ENCODE measurements at regions of chr1 and their contacts with region 1.

Region 1: GRCh38 chr1:76154206-76154956 is 79.8 kb downstream of the ST6GALNAC3 start:
- DNase-seq: peak; percentile 68 to 84 (median 81)
- ATAC-seq: peak; percentile 95
- H3K4me3 ChIP-seq: peak overlapping the region; percentile 80
- H3K4me3 Mint-ChIP-seq: peak overlapping the region; percentile 82 to 96 (median 92)
- H3K27ac ChIP-seq: peak overlapping the region; percentile 46
- H3K27ac Mint-ChIP-seq: peak overlapping the region; percentile 39 to 94 (median 90)
- H3K4me1 ChIP-seq: peaks cover 0 to 3% of the 10 kb centered on the region in 2 donors
- H3K4me1 Mint-ChIP-seq: peaks cover 7 to 15% (median 10%) of the 10 kb centered on the region in 7 donors
- H3K27me3 ChIP-seq: no peaks in the 10 kb centered on the region
- H3K27me3 Mint-ChIP-seq: peaks cover 0 to 9% (median 0%) of the 10 kb centered on the region in 5 donors

Region 2: DNA sequence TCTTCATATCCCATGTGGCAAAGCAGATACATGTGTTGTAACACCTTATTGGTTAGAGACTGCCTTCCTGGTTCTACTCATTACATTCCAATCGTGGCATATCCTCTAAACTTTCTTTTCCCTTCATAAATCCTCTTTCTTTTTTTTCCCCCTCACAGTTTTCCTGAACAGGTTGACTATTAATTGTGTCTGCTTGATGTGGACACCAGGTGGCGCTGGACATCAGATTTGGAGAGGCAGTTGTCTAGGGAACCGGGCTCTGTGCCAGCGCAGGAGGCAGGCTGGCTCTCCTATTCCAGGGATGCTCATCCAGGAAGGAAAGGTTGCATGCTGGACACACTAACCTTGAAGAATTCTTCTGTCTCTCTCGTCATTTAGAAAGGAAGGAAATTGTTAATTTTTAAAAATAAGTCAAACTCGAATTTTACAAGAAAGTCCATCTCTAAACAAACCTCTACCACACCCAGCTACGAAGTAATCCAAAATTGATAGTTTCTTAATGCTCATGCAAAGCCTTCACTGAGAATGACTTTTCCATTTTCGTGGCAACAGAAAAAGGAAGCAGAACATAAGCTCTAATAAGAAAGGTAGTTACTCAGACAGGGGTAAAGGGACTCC is 162.8 kb before region 1 on chr1:
- CTCF ChIA-PET with region 1: interaction called, 3 read pairs
- POLR2A ChIA-PET with region 1: interaction called, 3 read pairs
- intact Hi-C with region 1: loop called (anchors 1 kb)
- DNase-seq: peak; percentile 24 to 69 (median 60)
- ATAC-seq: peak; percentile 68
- H3K4me3 ChIP-seq: no peak overlapping the region
- H3K4me3 Mint-ChIP-seq: no peak overlapping the region
- H3K27ac ChIP-seq: no peak overlapping the region
- H3K27ac Mint-ChIP-seq: no peak overlapping the region
- H3K4me1 ChIP-seq: no peaks in the 10 kb centered on the region
- H3K4me1 Mint-ChIP-seq: no peaks in the 10 kb centered on the region
- H3K27me3 ChIP-seq: peaks cover 4% of the 10 kb centered on the region in 2 donors
- H3K27me3 Mint-ChIP-seq: peaks cover 0 to 8% (median 3%) of the 10 kb centered on the region in 5 donors

Region 3: DNA sequence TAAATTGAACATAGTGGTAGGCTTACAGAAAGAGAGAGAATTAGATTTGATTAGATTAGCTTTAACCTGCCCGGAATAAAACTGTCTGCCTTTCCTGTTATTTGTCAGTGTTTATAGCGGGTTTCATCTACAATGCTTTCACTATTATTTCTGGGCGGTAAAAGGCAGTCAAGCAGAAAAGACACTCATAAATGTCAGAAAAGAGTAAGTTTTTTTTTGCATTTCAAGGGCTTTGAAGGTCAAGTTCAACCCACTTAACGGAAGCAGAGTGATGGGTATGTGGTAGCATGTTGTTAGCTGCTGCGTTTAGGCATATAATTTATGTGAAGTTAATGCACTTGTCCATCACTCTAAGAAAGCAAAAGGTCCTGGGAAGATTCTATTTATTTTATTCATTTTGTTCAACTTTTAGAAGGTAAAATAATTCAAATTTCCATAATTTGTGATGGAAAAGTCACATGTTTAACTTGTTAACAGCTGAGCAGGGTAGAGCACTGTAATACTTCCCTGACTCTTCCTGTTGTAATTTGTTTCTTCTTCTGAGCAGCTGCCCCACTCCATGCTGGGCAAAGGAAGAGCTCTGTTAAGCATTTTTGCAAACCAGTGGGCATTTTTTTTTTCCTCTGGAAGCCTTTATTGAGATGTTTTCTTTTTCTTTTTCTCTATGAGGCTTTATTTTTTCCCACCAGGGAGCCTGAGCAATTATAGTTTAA is 140.3 kb after region 1 on chr1:
- CTCF ChIA-PET with region 1: interaction called, 3 read pairs
- POLR2A ChIA-PET with region 1: no interaction called
- intact Hi-C with region 1: loop called (anchors 2 to 5 kb)
- DNase-seq: peak in 5 of 9 donors; percentile 21 to 59 (median 49)
- ATAC-seq: peak; percentile 62
- H3K4me3 ChIP-seq: peak overlapping the region; percentile 7
- H3K4me3 Mint-ChIP-seq: peak overlapping the region; percentile 27 to 83 (median 69)
- H3K27ac ChIP-seq: peak overlapping the region; percentile 41
- H3K27ac Mint-ChIP-seq: peak overlapping the region; percentile 63 to 88 (median 81)
- H3K4me1 ChIP-seq: peaks cover 41 to 63% of the 10 kb centered on the region in 2 donors
- H3K4me1 Mint-ChIP-seq: peaks cover 21 to 93% (median 77%) of the 10 kb centered on the region in 7 donors
- H3K27me3 ChIP-seq: no peaks in the 10 kb centered on the region
- H3K27me3 Mint-ChIP-seq: peaks cover 0 to 2% (median 0%) of the 10 kb centered on the region in 5 donors

Region 4: GRCh38 chr1:76547916-76548315 is 393.5 kb after region 1 on chr1:
- CTCF ChIA-PET with region 1: interaction called, 4 read pairs
- POLR2A ChIA-PET with region 1: no interaction called
- intact Hi-C with region 1: loop called in 1 of 2 experiments (anchors 1 kb)
- DNase-seq: no peak
- ATAC-seq: no peak
- H3K4me3 ChIP-seq: no peak overlapping the region
- H3K4me3 Mint-ChIP-seq: no peak overlapping the region
- H3K27ac ChIP-seq: no peak overlapping the region
- H3K27ac Mint-ChIP-seq: no peak overlapping the region
- H3K4me1 ChIP-seq: no peaks in the 10 kb centered on the region
- H3K4me1 Mint-ChIP-seq: peaks cover 0 to 5% (median 0%) of the 10 kb centered on the region in 7 donors
- H3K27me3 ChIP-seq: no peaks in the 10 kb centered on the region
- H3K27me3 Mint-ChIP-seq: no peaks in the 10 kb centered on the region

Region 5: GRCh38 chr1:76759950-76760349 is 605.6 kb after region 1 on chr1:
- CTCF ChIA-PET with region 1: no interaction called
- POLR2A ChIA-PET with region 1: no interaction called
- intact Hi-C with region 1: loop called in 1 of 2 experiments (anchors 10 kb)
- DNase-seq: peak in 1 of 9 donors; percentile 3
- ATAC-seq: no peak
- H3K4me3 ChIP-seq: no peak overlapping the region
- H3K4me3 Mint-ChIP-seq: no peak overlapping the region
- H3K27ac ChIP-seq: no peak overlapping the region
- H3K27ac Mint-ChIP-seq: no peak overlapping the region
- H3K4me1 ChIP-seq: no peaks in the 10 kb centered on the region
- H3K4me1 Mint-ChIP-seq: peaks cover 0 to 2% (median 0%) of the 10 kb centered on the region in 7 donors
- H3K27me3 ChIP-seq: no peaks in the 10 kb centered on the region
- H3K27me3 Mint-ChIP-seq: peaks cover 3 to 11% (median 4%) of the 10 kb centered on the region in 5 donors

Region 6: GRCh38 chr1:77126307-77126706 is 971.9 kb after region 1 on chr1:
- CTCF ChIA-PET with region 1: interaction called, 10 read pairs
- POLR2A ChIA-PET with region 1: no interaction called
- intact Hi-C with region 1: loop called (anchors 1 kb)
- DNase-seq: peak in 6 of 9 donors; percentile 17 to 50 (median 38)
- ATAC-seq: peak; percentile 61
- H3K4me3 ChIP-seq: no peak overlapping the region
- H3K4me3 Mint-ChIP-seq: no peak overlapping the region
- H3K27ac ChIP-seq: no peak overlapping the region
- H3K27ac Mint-ChIP-seq: peak overlapping the region in 2 of 9 donors; percentile 22 to 41
- H3K4me1 ChIP-seq: no peaks in the 10 kb centered on the region
- H3K4me1 Mint-ChIP-seq: peaks cover 0 to 6% (median 0%) of the 10 kb centered on the region in 7 donors
- H3K27me3 ChIP-seq: no peaks in the 10 kb centered on the region
- H3K27me3 Mint-ChIP-seq: no peaks in the 10 kb centered on the region

Region 7: GRCh38 chr1:77683160-77684148 is 1529.1 kb after region 1 on chr1:
- CTCF ChIA-PET with region 1: no interaction called
- POLR2A ChIA-PET with region 1: no interaction called
- intact Hi-C with region 1: loop called (anchors 1 to 5 kb)
- DNase-seq: peak; percentile 83 to 94 (median 92)
- ATAC-seq: peak; percentile 86
- H3K4me3 ChIP-seq: peak overlapping the region; percentile 91
- H3K4me3 Mint-ChIP-seq: peak overlapping the region; percentile 80 to 97 (median 91)
- H3K27ac ChIP-seq: peak overlapping the region; percentile 92
- H3K27ac Mint-ChIP-seq: peak overlapping the region; percentile 89 to 100 (median 97)
- H3K4me1 ChIP-seq: peaks cover 15 to 33% of the 10 kb centered on the region in 2 donors
- H3K4me1 Mint-ChIP-seq: peaks cover 20 to 51% (median 40%) of the 10 kb centered on the region in 7 donors
- H3K27me3 ChIP-seq: no peaks in the 10 kb centered on the region
- H3K27me3 Mint-ChIP-seq: no peaks in the 10 kb centered on the region